Mammary epithelial cell (primary cell): ENCODE measurements at regions of chr3 and their contacts with region 1.

Region 1: GRCh38 chr3:49582177-49582576 is 27.9 kb downstream of the BSN start:
- DNase-seq: no peak
- H3K4me3 ChIP-seq: no peak overlapping the region
- H3K27ac ChIP-seq: no peak overlapping the region
- H3K4me1 ChIP-seq: no peaks in the 10 kb centered on the region
- H3K27me3 ChIP-seq: no peaks in the 10 kb centered on the region
- CTCF ChIP-seq: no peak

Region 2: GRCh38 chr3:49626101-49626581 is 44.0 kb after region 1 on chr3:
- CTCF ChIA-PET with region 1: no interaction called
- dilution Hi-C with region 1: loop called (anchors 5 kb)
- in situ Hi-C with region 1: no loop called
- intact Hi-C with region 1: no loop called
- DNase-seq: no peak
- H3K4me3 ChIP-seq: no peak overlapping the region
- H3K27ac ChIP-seq: no peak overlapping the region
- H3K4me1 ChIP-seq: no peaks in the 10 kb centered on the region
- H3K27me3 ChIP-seq: no peaks in the 10 kb centered on the region
- CTCF ChIP-seq: no peak

Region 3: GRCh38 chr3:49656541-49657112 is 74.5 kb after region 1 on chr3:
- CTCF ChIA-PET with region 1: no interaction called
- dilution Hi-C with region 1: no loop called
- in situ Hi-C with region 1: no loop called
- intact Hi-C with region 1: no loop called
- DNase-seq: no peak
- H3K4me3 ChIP-seq: no peak overlapping the region
- H3K27ac ChIP-seq: no peak overlapping the region
- H3K4me1 ChIP-seq: peaks cover 4% of the 10 kb centered on the region
- H3K27me3 ChIP-seq: no peaks in the 10 kb centered on the region
- CTCF ChIP-seq: no peak

Region 4: GRCh38 chr3:49734752-49735151 is 152.6 kb after region 1 on chr3:
- CTCF ChIA-PET with region 1: no interaction called
- dilution Hi-C with region 1: no loop called
- in situ Hi-C with region 1: no loop called
- intact Hi-C with region 1: no loop called
- DNase-seq: no peak
- H3K4me3 ChIP-seq: no peak overlapping the region
- H3K27ac ChIP-seq: no peak overlapping the region
- H3K4me1 ChIP-seq: no peaks in the 10 kb centered on the region
- H3K27me3 ChIP-seq: no peaks in the 10 kb centered on the region
- CTCF ChIP-seq: no peak